ENCODE measurements at regions of chr12 and their contacts with region 1.

Region 1: GRCh38 chr12:99911081-99911480 is 73.7 kb downstream of the ANKS1B start:
- DNase-seq: peak; percentile 91
- ATAC-seq: peak; percentile 64
- H3K4me3 ChIP-seq: no peak overlapping the region; the same call in 1 of the 2 replicates
- H3K27ac ChIP-seq: peak overlapping the region; percentile 11; the same call in 1 of the 2 replicates
- H3K4me1 ChIP-seq: peaks cover 37% of the 10 kb centered on the region
- H3K27me3 ChIP-seq: no peaks in the 10 kb centered on the region
- CTCF ChIP-seq: no peak

Region 2: GRCh38 chr12:99959547-99960180 is 48.6 kb after region 1 on chr12:
- CTCF ChIA-PET with region 1: no interaction called
- POLR2A ChIA-PET with region 1: no interaction called
- intact Hi-C with region 1: loop called (anchors 1 kb)
- DNase-seq: peak; percentile 95
- ATAC-seq: peak; percentile 85
- H3K4me3 ChIP-seq: 0 out of 2 replicates have a peak overlapping the region, but pooled peaks have one; percentile 12
- H3K27ac ChIP-seq: peak overlapping the region; percentile 40
- H3K4me1 ChIP-seq: peaks cover 18% of the 10 kb centered on the region
- H3K27me3 ChIP-seq: peaks cover 14% of the 10 kb centered on the region; the same call in 1 of the 2 replicates
- CTCF ChIP-seq: no peak

Region 3: DNA sequence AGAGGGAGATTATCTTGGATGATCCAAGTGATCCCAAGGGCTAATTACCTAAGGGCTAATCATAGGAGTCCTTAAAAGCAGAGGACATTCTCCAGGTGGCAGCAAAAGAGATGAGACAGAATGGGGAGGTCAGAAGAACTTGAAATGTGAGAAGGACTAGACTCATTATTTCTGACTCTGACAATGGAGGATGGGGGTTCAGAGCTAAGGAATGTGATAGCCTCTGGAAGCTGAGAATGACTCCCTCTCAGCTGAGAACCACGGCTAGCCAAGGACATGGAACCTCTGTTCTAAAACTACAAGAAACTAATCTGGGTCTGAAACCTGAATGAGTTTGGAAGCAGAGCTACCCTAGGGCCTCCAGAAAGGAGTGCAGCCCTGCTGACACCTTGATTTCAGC is 109.3 kb after region 1 on chr12:
- CTCF ChIA-PET with region 1: no interaction called
- POLR2A ChIA-PET with region 1: no interaction called
- intact Hi-C with region 1: no loop called
- DNase-seq: peak; percentile 28
- ATAC-seq: peak; percentile 49; the same call in 1 of the 2 replicates
- H3K4me3 ChIP-seq: no peak overlapping the region
- H3K27ac ChIP-seq: no peak overlapping the region
- H3K4me1 ChIP-seq: no peaks in the 10 kb centered on the region
- H3K27me3 ChIP-seq: no peaks in the 10 kb centered on the region
- CTCF ChIP-seq: no peak

Region 4: DNA sequence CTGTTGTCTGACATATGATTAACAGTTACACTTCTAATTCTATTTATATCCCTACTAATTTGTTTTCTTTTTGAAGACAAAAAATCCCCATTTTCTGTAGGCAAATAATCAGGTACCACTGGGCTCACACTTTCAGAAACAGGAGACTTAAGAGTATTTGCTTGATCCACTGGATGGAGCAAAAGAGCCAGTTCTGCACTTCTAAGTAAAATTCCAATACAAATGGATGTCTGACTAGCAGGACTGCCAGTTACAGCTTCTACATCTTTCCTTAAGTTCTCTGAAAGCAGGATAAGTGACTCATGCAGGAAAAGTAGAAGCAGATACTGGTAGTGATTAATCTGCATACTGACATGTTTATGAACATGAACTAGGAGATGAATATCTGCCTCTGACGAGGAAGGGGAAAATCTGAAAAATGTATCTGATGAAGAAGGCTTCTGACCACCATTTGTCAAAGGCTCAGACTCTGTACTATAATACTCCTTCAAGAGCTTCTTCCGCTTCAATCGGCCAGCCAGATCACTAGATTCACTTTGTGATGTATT is 147.5 kb after region 1 on chr12:
- CTCF ChIA-PET with region 1: no interaction called
- POLR2A ChIA-PET with region 1: no interaction called
- intact Hi-C with region 1: loop called (anchors 5 kb)
- DNase-seq: peak; percentile 68
- ATAC-seq: peak; percentile 96
- H3K4me3 ChIP-seq: no peak overlapping the region
- H3K27ac ChIP-seq: no peak overlapping the region
- H3K4me1 ChIP-seq: peaks cover 6% of the 10 kb centered on the region; the same call in 1 of the 2 replicates
- H3K27me3 ChIP-seq: no peaks in the 10 kb centered on the region
- CTCF ChIP-seq: peak; percentile 52

Measured in PC-3 (cell line).